ENCODE measurements at regions of chr2 and their contacts with region 1.

Region 1: GRCh38 chr2:144505245-144505831 is 14.6 kb downstream of the ZEB2 start:
- DNase-seq: no peak
- ATAC-seq: peak; percentile 38
- H3K4me3 ChIP-seq: no peak overlapping the region
- H3K4me3 Mint-ChIP-seq: no peak overlapping the region
- H3K27ac ChIP-seq: peak overlapping the region in 1 of 2 donors; percentile 35
- H3K27ac Mint-ChIP-seq: peak overlapping the region; percentile 75
- H3K4me1 ChIP-seq: peaks cover 42 to 45% of the 10 kb centered on the region in 2 donors
- H3K4me1 Mint-ChIP-seq: peaks cover 70% of the 10 kb centered on the region
- H3K27me3 ChIP-seq: no peaks in the 10 kb centered on the region
- H3K27me3 Mint-ChIP-seq: no peaks in the 10 kb centered on the region
- CTCF ChIP-seq: no peak

Region 2: DNA sequence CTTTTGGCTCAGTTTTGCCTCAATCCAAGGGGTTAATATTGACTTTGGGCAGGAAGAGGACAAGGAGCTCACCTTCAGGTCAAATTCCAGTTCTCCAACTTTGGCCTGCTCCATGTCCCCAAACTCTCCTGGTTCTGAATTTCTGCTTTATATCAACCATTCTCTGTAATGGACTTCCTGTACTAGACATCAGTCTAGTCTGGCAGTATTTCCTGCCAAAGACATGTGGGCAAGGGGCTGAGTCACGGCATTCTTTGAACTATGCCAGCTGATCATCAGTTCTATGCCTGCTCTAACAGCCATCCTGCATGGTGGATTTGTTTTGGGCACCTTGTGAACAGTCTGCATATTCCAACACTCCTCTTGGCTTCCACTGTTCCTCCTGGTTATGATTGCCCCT is 184.8 kb before region 1 on chr2:
- CTCF ChIA-PET with region 1: no interaction called
- POLR2A ChIA-PET with region 1: no interaction called
- intact Hi-C with region 1: loop called (anchors 5 kb)
- DNase-seq: peak; percentile 18
- ATAC-seq: peak; percentile 63
- H3K4me3 ChIP-seq: no peak overlapping the region
- H3K4me3 Mint-ChIP-seq: peak overlapping the region; percentile 50
- H3K27ac ChIP-seq: no peak overlapping the region
- H3K27ac Mint-ChIP-seq: no peak overlapping the region
- H3K4me1 ChIP-seq: peaks cover 23 to 25% of the 10 kb centered on the region in 2 donors
- H3K4me1 Mint-ChIP-seq: peaks cover 42% of the 10 kb centered on the region
- H3K27me3 ChIP-seq: no peaks in the 10 kb centered on the region
- H3K27me3 Mint-ChIP-seq: no peaks in the 10 kb centered on the region
- CTCF ChIP-seq: no peak

Region 3: DNA sequence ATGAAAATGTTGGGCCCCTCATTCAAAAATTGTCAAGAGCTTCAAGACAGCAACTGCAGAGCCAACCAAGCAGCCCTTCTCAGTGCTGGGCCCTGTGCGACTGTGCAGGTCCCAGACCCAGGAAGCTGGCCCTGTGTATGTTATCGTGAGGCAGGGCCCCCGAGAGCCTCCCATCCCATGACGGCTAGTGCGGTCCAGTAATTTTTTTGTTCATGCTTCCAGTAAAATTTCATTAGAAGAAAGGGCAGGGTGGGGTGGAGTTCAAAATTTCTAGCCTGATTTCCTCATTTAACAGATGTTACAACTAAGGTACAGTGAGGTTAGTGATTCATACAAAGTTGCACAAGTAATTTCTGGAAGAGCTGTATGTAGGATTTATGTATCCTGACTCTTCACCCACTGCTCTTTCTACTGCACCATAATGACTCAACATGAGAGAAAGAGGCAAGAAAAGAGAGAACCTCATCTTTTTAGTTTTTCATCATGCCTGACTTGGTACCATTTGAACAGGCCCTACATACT is 91.0 kb before region 1 on chr2:
- CTCF ChIA-PET with region 1: no interaction called
- POLR2A ChIA-PET with region 1: no interaction called
- intact Hi-C with region 1: no loop called
- DNase-seq: no peak
- ATAC-seq: no peak
- H3K4me3 ChIP-seq: no peak overlapping the region
- H3K4me3 Mint-ChIP-seq: no peak overlapping the region
- H3K27ac ChIP-seq: peak overlapping the region in 1 of 2 donors; percentile 43
- H3K27ac Mint-ChIP-seq: peak overlapping the region; percentile 62
- H3K4me1 ChIP-seq: peaks cover 7 to 8% of the 10 kb centered on the region in 2 donors
- H3K4me1 Mint-ChIP-seq: peaks cover 29% of the 10 kb centered on the region
- H3K27me3 ChIP-seq: no peaks in the 10 kb centered on the region
- H3K27me3 Mint-ChIP-seq: no peaks in the 10 kb centered on the region
- CTCF ChIP-seq: no peak

Region 4: GRCh38 chr2:144466637-144467036 is 38.7 kb before region 1 on chr2:
- CTCF ChIA-PET with region 1: no interaction called
- POLR2A ChIA-PET with region 1: interaction called, 3 read pairs
- intact Hi-C with region 1: loop called (anchors 5 kb)
- DNase-seq: no peak
- ATAC-seq: no peak
- H3K4me3 ChIP-seq: no peak overlapping the region
- H3K4me3 Mint-ChIP-seq: no peak overlapping the region
- H3K27ac ChIP-seq: no peak overlapping the region
- H3K27ac Mint-ChIP-seq: no peak overlapping the region
- H3K4me1 ChIP-seq: peaks cover 22 to 29% of the 10 kb centered on the region in 2 donors
- H3K4me1 Mint-ChIP-seq: peaks cover 44% of the 10 kb centered on the region
- H3K27me3 ChIP-seq: no peaks in the 10 kb centered on the region
- H3K27me3 Mint-ChIP-seq: no peaks in the 10 kb centered on the region
- CTCF ChIP-seq: no peak

Region 5: GRCh38 chr2:144479138-144479537 is 26.2 kb before region 1 on chr2:
- CTCF ChIA-PET with region 1: interaction called, 4 read pairs
- POLR2A ChIA-PET with region 1: interaction called, 10 read pairs
- intact Hi-C with region 1: no loop called
- DNase-seq: no peak
- ATAC-seq: no peak
- H3K4me3 ChIP-seq: no peak overlapping the region
- H3K4me3 Mint-ChIP-seq: no peak overlapping the region
- H3K27ac ChIP-seq: no peak overlapping the region
- H3K27ac Mint-ChIP-seq: no peak overlapping the region
- H3K4me1 ChIP-seq: peaks cover 30 to 34% of the 10 kb centered on the region in 2 donors
- H3K4me1 Mint-ChIP-seq: peaks cover 74% of the 10 kb centered on the region
- H3K27me3 ChIP-seq: no peaks in the 10 kb centered on the region
- H3K27me3 Mint-ChIP-seq: no peaks in the 10 kb centered on the region
- CTCF ChIP-seq: no peak

Region 6: DNA sequence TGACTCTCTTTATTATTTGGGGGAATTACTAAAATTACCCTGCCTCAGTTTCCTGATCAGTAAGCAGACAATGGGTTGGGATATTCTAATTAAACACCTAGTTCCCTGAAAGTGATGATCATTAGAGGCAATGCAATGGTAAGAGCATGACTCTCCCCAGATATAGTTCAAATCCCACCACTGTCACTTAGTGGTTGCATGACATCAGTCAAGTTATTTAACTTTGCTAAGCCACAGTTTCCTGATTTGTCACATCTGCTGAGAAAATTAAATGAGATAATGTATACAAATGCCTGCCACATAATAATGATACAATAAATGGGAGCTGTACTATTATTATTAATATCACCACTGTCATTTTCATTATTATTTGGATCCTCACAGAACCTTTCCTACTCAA is 15.3 kb before region 1 on chr2:
- CTCF ChIA-PET with region 1: no interaction called
- POLR2A ChIA-PET with region 1: no interaction called
- intact Hi-C with region 1: loop called (anchors 2 kb)
- DNase-seq: no peak
- ATAC-seq: no peak
- H3K4me3 ChIP-seq: no peak overlapping the region
- H3K4me3 Mint-ChIP-seq: no peak overlapping the region
- H3K27ac ChIP-seq: peak overlapping the region in 1 of 2 donors; percentile 56
- H3K27ac Mint-ChIP-seq: no peak overlapping the region
- H3K4me1 ChIP-seq: peaks cover 17 to 19% of the 10 kb centered on the region in 2 donors
- H3K4me1 Mint-ChIP-seq: peaks cover 65% of the 10 kb centered on the region
- H3K27me3 ChIP-seq: no peaks in the 10 kb centered on the region
- H3K27me3 Mint-ChIP-seq: no peaks in the 10 kb centered on the region
- CTCF ChIP-seq: no peak

Region 7: DNA sequence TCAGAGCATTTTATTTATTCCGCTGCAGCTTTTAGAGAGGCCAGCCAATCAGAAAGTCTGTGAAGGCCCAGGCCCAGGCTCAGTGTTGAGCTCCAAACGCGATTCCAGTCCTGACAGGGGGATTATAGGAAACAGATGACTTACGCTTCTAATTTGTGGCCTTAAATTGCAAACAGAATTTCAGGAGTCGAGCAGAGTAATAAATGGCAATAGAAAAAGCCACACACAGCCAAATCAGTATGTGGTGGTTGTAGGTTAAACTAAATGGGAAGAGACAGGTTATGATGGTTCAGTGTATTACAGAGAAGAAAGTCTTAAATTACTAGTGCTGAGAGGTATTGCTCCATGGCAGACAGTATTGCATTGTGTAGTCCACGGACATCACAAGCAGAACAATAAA is 145.6 kb after region 1 on chr2:
- CTCF ChIA-PET with region 1: no interaction called
- POLR2A ChIA-PET with region 1: no interaction called
- intact Hi-C with region 1: no loop called
- DNase-seq: no peak
- ATAC-seq: no peak
- H3K4me3 ChIP-seq: no peak overlapping the region
- H3K4me3 Mint-ChIP-seq: no peak overlapping the region
- H3K27ac ChIP-seq: no peak overlapping the region
- H3K27ac Mint-ChIP-seq: no peak overlapping the region
- H3K4me1 ChIP-seq: peaks cover 4 to 5% of the 10 kb centered on the region in 2 donors
- H3K4me1 Mint-ChIP-seq: peaks cover 2% of the 10 kb centered on the region
- H3K27me3 ChIP-seq: no peaks in the 10 kb centered on the region
- H3K27me3 Mint-ChIP-seq: no peaks in the 10 kb centered on the region
- CTCF ChIP-seq: no peak

Measured in B cell (primary cell).